Gastrocnemius medialis (tissue), 4 donors: ENCODE measurements at regions of chr20 and their contacts with region 1.

Region 1: GRCh38 chr20:31605031-31605901 is at the start of gene ID1:
- DNase-seq: peak; percentile 92 to 98
- ATAC-seq: peak; percentile 80 to 91
- H3K4me3 ChIP-seq: peak within 1 kb of the TSS; percentile 72 to 89 (median 78)
- H3K27ac ChIP-seq: peak within 1 kb of the TSS; percentile 84 to 95 (median 92)
- H3K4me1 ChIP-seq: peaks cover 0 to 35% of the 10 kb centered on the region in 2 donors
- H3K27me3 ChIP-seq: no peaks in the 10 kb centered on the region
- CTCF ChIP-seq: no peak
- POLR2A ChIP-seq: peak; percentile 94 to 95
- total RNA-seq, gene ID1: 115 to 206 (median 148) TPM

Region 2: GRCh38 chr20:31560094-31560899 is 45.0 kb before region 1 on chr20:
- in situ Hi-C with region 1: loop called (anchors 5 kb)
- intact Hi-C with region 1: no loop called
- DNase-seq: peak; percentile 28 to 74
- ATAC-seq: peak in 1 of 2 donors; percentile 63
- H3K4me3 ChIP-seq: no peak overlapping the region
- H3K27ac ChIP-seq: peak overlapping the region; percentile 74 to 84 (median 78)
- H3K4me1 ChIP-seq: peaks cover 15 to 32% of the 10 kb centered on the region in 2 donors
- H3K27me3 ChIP-seq: no peaks in the 10 kb centered on the region
- CTCF ChIP-seq: peak; percentile 75 to 90 (median 79)
- POLR2A ChIP-seq: no peak

Region 3: DNA sequence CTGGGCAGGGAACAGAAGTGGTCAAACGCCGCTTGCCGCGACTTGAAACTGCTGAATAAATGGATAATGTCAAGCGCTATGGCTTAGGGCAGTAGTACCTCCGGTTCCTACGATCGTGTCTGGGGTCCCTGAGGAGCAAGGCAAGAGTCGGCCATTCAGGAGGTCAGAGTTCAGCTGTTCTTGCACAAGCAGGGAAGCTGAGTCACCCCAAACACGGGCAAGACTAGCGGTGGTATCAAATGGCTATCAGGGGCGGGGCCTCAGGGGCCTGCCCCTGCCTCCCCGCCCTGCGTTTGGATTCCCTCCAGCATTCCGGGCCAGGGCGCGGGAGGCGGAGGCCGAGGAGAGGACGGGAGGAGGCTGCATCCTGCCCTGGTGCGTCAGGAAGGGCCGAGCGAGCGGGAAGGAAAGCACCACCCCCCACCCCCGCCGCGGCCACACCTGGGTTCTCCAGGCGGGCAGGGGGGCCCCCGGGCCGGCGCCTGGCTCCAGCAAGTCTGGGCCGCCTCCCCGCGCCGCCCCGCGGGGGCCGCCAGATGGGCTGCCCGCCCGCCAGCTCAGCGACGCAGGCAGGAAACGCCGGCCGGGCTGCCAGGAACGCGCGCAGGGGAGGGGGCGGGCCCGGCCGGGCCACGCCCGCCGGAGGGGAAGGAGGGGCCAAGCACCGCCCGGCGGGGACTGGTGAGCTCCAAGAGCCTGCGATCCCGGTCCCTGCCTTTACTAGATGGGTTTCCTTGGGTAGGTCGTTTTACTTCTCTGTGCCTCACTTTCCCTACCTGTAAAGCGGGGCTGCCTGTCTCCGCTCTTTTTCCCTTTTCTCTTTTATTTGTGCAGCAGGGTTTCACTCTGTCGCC is 32.3 kb before region 1 on chr20:
- in situ Hi-C with region 1: no loop called
- intact Hi-C with region 1: loop called (anchors 1 kb)
- DNase-seq: peak; percentile 96 to 98
- ATAC-seq: peak; percentile 92
- H3K4me3 ChIP-seq: peak overlapping the region; percentile 54 to 68 (median 56)
- H3K27ac ChIP-seq: peak overlapping the region; percentile 86 to 93 (median 89)
- H3K4me1 ChIP-seq: peaks cover 13 to 19% of the 10 kb centered on the region in 2 donors
- H3K27me3 ChIP-seq: no peaks in the 10 kb centered on the region
- CTCF ChIP-seq: peak in 3 of 5 experiments; percentile 7 to 25 (median 23)
- POLR2A ChIP-seq: peak; percentile 86 to 89